ENCODE measurements at regions of chr2 and their contacts with region 1.

Region 1: GRCh38 chr2:169446452-169446851 is 32.8 kb upstream of the BBS5 start:
- DNase-seq: no peak
- ATAC-seq: no peak
- H3K4me3 ChIP-seq: no peak overlapping the region
- H3K27ac ChIP-seq: no peak overlapping the region
- H3K4me1 ChIP-seq: no peaks in the 10 kb centered on the region
- H3K27me3 ChIP-seq: no peaks in the 10 kb centered on the region
- CTCF ChIP-seq: no peak
- POLR2A ChIP-seq: no peak
- RAD21 ChIP-seq: no peak

Region 2: DNA sequence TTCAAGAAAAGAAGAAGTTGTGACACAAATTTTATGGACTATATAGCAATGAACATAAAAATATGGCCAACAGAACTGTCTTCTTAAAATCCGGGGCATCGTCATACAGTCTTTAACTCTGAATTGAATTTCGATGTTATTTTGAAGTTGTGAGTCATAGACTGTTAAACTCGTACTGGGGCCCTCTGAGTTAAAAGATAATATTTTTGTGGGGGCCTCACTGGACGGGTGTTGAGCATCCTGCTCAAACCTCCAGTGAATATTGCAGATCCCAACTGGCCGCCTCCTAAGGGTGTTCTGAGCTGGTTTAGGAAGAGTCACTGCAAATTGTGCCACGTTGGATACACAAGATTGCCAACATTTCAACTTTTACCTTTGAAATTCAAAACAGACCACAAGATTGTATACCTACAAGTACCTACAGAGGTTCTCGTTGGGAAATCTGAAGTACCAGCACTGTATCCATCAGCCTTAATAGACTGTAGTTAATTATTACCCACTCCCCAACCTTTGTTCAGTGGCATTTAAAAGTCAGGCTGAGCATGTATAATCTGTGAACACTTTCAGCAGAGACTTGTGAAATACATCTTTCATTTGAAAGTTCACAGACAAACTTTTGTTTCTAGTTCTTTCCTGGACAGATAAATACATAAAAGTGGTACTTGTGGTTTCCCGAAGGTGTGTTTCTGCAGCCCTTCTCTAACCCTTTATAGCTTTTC is 315.0 kb after region 1 on chr2:
- CTCF ChIA-PET with region 1: no interaction called
- POLR2A ChIA-PET with region 1: no interaction called
- RAD21 ChIA-PET with region 1: no interaction called
- intact Hi-C with region 1: no loop called
- DNase-seq: no peak
- ATAC-seq: no peak
- H3K4me3 ChIP-seq: no peak overlapping the region
- H3K27ac ChIP-seq: no peak overlapping the region
- H3K4me1 ChIP-seq: peaks cover 0 to 11% of the 10 kb centered on the region in 2 experiments; a peak in 3 of 4 replicates
- H3K27me3 ChIP-seq: no peaks in the 10 kb centered on the region
- CTCF ChIP-seq: no peak
- POLR2A ChIP-seq: no peak
- RAD21 ChIP-seq: no peak

Region 3: DNA sequence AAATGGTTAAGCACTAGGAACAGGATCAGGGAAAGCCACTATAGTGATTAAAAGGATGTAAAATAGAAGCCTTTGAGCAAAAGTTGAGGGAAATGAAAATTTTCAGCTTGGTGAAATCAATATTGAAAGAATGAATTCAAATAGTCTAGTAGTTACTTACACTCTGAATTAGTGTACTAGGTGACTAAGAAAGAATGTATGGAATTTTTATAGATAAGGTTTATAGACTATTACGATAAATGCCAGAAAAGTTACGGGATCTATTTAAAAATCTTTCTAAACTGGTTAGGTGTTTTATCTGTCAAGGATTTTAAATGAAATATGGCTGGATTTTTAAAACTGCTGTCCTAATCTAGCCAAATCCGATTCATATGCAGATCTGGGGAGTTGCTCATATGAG is 940.1 kb after region 1 on chr2:
- CTCF ChIA-PET with region 1: no interaction called
- POLR2A ChIA-PET with region 1: no interaction called
- RAD21 ChIA-PET with region 1: no interaction called
- intact Hi-C with region 1: loop called (anchors 10 kb)
- DNase-seq: no peak
- ATAC-seq: no peak
- H3K4me3 ChIP-seq: no peak overlapping the region
- H3K27ac ChIP-seq: no peak overlapping the region
- H3K4me1 ChIP-seq: no peaks in the 10 kb centered on the region
- H3K27me3 ChIP-seq: no peaks in the 10 kb centered on the region
- CTCF ChIP-seq: no peak
- POLR2A ChIP-seq: no peak
- RAD21 ChIP-seq: no peak